CD4-positive, alpha-beta memory T cell (primary cell): ENCODE measurements at regions of chr14 and their contacts with region 1.

Region 1: DNA sequence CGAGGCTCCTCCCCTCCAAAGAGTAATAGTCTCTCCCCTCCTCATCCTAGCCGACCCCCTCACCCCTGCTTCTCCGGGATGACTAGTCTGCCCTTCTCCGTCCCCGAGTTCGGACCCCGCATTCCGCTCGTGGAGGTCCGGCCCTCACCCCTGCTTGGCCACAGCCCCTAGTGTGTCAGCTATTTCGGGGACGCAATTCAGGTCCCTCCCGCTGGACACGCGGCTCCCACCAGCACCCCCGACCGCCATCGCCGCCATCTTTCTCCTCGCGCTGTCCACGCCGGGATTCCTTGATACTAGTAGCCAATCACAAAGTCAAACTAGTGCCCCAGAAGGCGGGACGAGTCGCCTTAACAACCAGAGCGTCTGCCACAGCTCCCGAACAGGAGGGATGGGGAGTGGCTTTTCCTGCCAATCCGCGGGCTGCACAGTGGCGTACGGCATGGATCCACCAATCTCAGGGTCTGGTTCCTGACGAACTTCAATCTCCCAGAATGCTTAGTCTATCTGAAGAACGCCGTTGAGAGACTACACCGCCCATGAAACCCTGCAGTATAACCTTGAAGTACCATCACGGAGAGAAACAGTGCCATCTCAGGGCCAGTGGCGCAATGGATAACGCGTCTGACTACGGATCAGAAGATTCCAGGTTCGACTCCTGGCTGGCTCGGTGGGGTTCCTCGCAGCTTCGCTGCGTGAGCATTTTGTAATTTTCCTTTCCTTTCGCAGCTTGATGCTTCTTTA is at the start of gene PRMT5:
- DNase-seq: peak; percentile 98 to 100 (median 99)
- H3K4me3 ChIP-seq: peak within 1 kb of the TSS; percentile 83 to 99
- H3K4me3 Mint-ChIP-seq: no peak within 1 kb of the TSS
- H3K27ac ChIP-seq: peak within 1 kb of the TSS; percentile 91
- H3K27ac Mint-ChIP-seq: peak within 1 kb of the TSS in 1 of 7 donors; percentile 75
- H3K4me1 ChIP-seq: peaks cover 17% of the 10 kb centered on the region
- H3K4me1 Mint-ChIP-seq: peaks cover 9 to 14% (median 12%) of the 10 kb centered on the region in 4 donors
- H3K27me3 ChIP-seq: no peaks in the 10 kb centered on the region
- H3K27me3 Mint-ChIP-seq: no peaks in the 10 kb centered on the region
- total RNA-seq, gene PRMT5: 25.8 to 30.5 TPM

Region 2: GRCh38 chr14:22766456-22767322 is 162.6 kb before region 1 on chr14 and contains the start of gene OXA1L:
- CTCF ChIA-PET with region 1: interaction called, 3 read pairs
- POLR2A ChIA-PET with region 1: interaction called, 14 read pairs
- intact Hi-C with region 1: no loop called
- DNase-seq: peak; percentile 95 to 98 (median 98)
- H3K4me3 ChIP-seq: peak within 1 kb of the TSS; percentile 62 to 88
- H3K4me3 Mint-ChIP-seq: peak within 1 kb of the TSS; percentile 85 to 96 (median 94)
- H3K27ac ChIP-seq: peak within 1 kb of the TSS; percentile 88
- H3K27ac Mint-ChIP-seq: peak within 1 kb of the TSS; percentile 86 to 100 (median 98)
- H3K4me1 ChIP-seq: peaks cover 24% of the 10 kb centered on the region
- H3K4me1 Mint-ChIP-seq: peaks cover 26 to 39% (median 34%) of the 10 kb centered on the region in 4 donors
- H3K27me3 ChIP-seq: no peaks in the 10 kb centered on the region
- H3K27me3 Mint-ChIP-seq: no peaks in the 10 kb centered on the region
- total RNA-seq, gene OXA1L: 129 to 137 TPM

Region 3: GRCh38 chr14:22836301-22837113 is 92.8 kb before region 1 on chr14 and contains the start of gene MMP14:
- CTCF ChIA-PET with region 1: no interaction called
- POLR2A ChIA-PET with region 1: no interaction called
- intact Hi-C with region 1: no loop called
- DNase-seq: no peak
- H3K4me3 ChIP-seq: no peak within 1 kb of the TSS
- H3K4me3 Mint-ChIP-seq: peak within 1 kb of the TSS; percentile 74 to 86 (median 80)
- H3K27ac ChIP-seq: no peak within 1 kb of the TSS
- H3K27ac Mint-ChIP-seq: peak within 1 kb of the TSS in 4 of 7 donors; percentile 71 to 92 (median 78)
- H3K4me1 ChIP-seq: peaks cover 11% of the 10 kb centered on the region
- H3K4me1 Mint-ChIP-seq: peaks cover 4 to 18% (median 12%) of the 10 kb centered on the region in 4 donors
- H3K27me3 ChIP-seq: peaks cover 13% of the 10 kb centered on the region
- H3K27me3 Mint-ChIP-seq: peaks cover 8 to 22% of the 10 kb centered on the region in 2 donors
- total RNA-seq, gene MMP14: 3.0 to 3.8 TPM

Region 4: GRCh38 chr14:22886500-22887259 is 42.6 kb before region 1 on chr14:
- CTCF ChIA-PET with region 1: interaction called, 9 read pairs
- POLR2A ChIA-PET with region 1: interaction called, 7 read pairs
- intact Hi-C with region 1: loop called (anchors 2 kb)
- DNase-seq: peak; percentile 73 to 85 (median 78)
- H3K4me3 ChIP-seq: peak overlapping the region; percentile 24 to 30
- H3K4me3 Mint-ChIP-seq: peak overlapping the region; percentile 87 to 97 (median 94)
- H3K27ac ChIP-seq: peak overlapping the region; percentile 68
- H3K27ac Mint-ChIP-seq: peak overlapping the region; percentile 93 to 99 (median 97)
- H3K4me1 ChIP-seq: peaks cover 57% of the 10 kb centered on the region
- H3K4me1 Mint-ChIP-seq: peaks cover 34 to 85% (median 59%) of the 10 kb centered on the region in 4 donors
- H3K27me3 ChIP-seq: no peaks in the 10 kb centered on the region
- H3K27me3 Mint-ChIP-seq: no peaks in the 10 kb centered on the region

Region 5: DNA sequence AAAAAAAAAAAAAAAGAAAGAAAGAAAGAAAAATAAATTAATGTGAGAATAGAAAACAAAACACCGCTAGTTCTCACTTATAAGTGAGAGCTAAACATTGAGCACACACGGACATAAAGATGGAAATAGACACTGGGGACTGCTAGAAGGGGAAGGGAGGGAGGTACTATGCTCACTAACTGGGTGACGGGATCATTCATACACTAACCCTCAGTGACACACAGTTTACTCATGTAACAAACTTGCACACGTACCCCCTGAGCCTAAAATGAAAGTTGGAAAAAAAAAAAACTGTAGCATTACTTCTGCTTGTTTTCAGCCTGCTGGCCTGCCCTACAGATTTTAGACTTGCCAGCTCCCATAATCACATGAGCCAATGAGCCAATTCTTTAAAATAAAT is 10.4 kb after region 1 on chr14:
- CTCF ChIA-PET with region 1: interaction called, 22 read pairs
- POLR2A ChIA-PET with region 1: interaction called, 5 read pairs
- intact Hi-C with region 1: no loop called
- DNase-seq: no peak
- H3K4me3 ChIP-seq: no peak overlapping the region
- H3K4me3 Mint-ChIP-seq: no peak overlapping the region
- H3K27ac ChIP-seq: no peak overlapping the region
- H3K27ac Mint-ChIP-seq: peak overlapping the region in 1 of 7 donors; percentile 1
- H3K4me1 ChIP-seq: no peaks in the 10 kb centered on the region
- H3K4me1 Mint-ChIP-seq: peaks cover 0 to 6% (median under 1%) of the 10 kb centered on the region in 4 donors
- H3K27me3 ChIP-seq: no peaks in the 10 kb centered on the region
- H3K27me3 Mint-ChIP-seq: no peaks in the 10 kb centered on the region

Region 6: GRCh38 chr14:22973217-22974032 is 44.1 kb after region 1 on chr14:
- CTCF ChIA-PET with region 1: interaction called, 18 read pairs
- POLR2A ChIA-PET with region 1: interaction called, 8 read pairs
- intact Hi-C with region 1: no loop called
- DNase-seq: peak in 4 of 5 donors; percentile 32 to 46 (median 38)
- H3K4me3 ChIP-seq: no peak overlapping the region
- H3K4me3 Mint-ChIP-seq: no peak overlapping the region
- H3K27ac ChIP-seq: no peak overlapping the region
- H3K27ac Mint-ChIP-seq: no peak overlapping the region
- H3K4me1 ChIP-seq: no peaks in the 10 kb centered on the region
- H3K4me1 Mint-ChIP-seq: no peaks in the 10 kb centered on the region
- H3K27me3 ChIP-seq: no peaks in the 10 kb centered on the region
- H3K27me3 Mint-ChIP-seq: peaks cover 0 to 3% of the 10 kb centered on the region in 2 donors

Region 7: DNA sequence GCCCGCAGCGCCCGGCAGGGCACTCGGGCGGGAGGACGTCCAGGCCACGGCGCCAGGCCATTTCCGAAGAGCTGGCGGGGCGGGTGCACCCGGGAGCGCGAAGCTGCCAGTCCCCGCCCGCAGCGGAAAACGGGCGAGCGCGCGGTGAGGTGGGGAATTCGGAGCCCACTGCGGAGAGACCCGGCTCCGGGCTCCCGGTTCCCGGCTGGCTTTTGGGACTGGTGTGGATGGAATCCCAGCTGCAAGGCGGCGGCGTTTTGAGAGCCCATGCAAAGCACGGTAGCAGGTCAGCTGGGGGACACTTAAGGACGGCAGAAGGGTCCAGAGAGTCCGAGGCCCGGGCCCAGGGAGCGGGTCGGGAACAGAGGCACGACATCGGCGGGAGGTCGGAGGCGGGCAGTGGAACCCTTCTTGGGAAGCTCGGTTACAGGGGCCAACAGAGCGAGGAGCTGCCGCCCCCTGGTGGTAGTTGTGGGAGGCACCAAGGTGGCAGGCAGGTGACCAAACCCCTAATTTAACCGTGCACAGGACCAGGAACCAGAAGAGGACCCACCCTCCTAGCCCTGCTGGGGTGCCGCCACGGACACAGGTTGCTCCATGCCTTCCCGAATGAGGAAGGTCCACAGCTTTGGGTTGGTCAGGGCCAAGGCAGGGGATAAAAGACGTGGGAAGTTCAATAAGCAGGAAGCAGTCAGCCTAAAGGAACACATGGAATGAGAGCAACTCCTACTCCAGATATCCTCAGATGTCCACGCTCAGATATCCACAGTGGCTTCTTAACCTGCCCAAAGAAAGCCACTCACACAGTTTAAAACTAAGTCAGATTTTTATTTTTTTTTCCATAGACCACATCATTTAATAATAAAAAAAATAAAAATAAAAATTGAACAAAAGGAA is 128.7 kb after region 1 on chr14:
- CTCF ChIA-PET with region 1: interaction called, 15 read pairs
- POLR2A ChIA-PET with region 1: interaction called, 3 read pairs
- intact Hi-C with region 1: loop called (anchors 1 kb)
- DNase-seq: peak; percentile 80 to 84 (median 82)
- H3K4me3 ChIP-seq: peak overlapping the region; percentile 36 to 89
- H3K4me3 Mint-ChIP-seq: peak overlapping the region; percentile 84 to 91 (median 88)
- H3K27ac ChIP-seq: peak overlapping the region; percentile 36
- H3K27ac Mint-ChIP-seq: peak overlapping the region in 6 of 7 donors; percentile 60 to 83 (median 82)
- H3K4me1 ChIP-seq: peaks cover 17% of the 10 kb centered on the region
- H3K4me1 Mint-ChIP-seq: peaks cover 11 to 21% (median 15%) of the 10 kb centered on the region in 4 donors
- H3K27me3 ChIP-seq: no peaks in the 10 kb centered on the region
- H3K27me3 Mint-ChIP-seq: peaks cover 0 to 1% of the 10 kb centered on the region in 2 donors

Region 8: GRCh38 chr14:23469127-23469905 is 540.0 kb after region 1 on chr14 and contains the start of gene NGDN:
- CTCF ChIA-PET with region 1: no interaction called
- POLR2A ChIA-PET with region 1: no interaction called
- intact Hi-C with region 1: no loop called
- DNase-seq: peak; percentile 93 to 99 (median 97)
- H3K4me3 ChIP-seq: peak within 1 kb of the TSS; percentile 75 to 78
- H3K4me3 Mint-ChIP-seq: peak within 1 kb of the TSS in 1 of 8 donors; percentile 35
- H3K27ac ChIP-seq: peak within 1 kb of the TSS; percentile 89
- H3K27ac Mint-ChIP-seq: peak within 1 kb of the TSS in 3 of 7 donors; percentile 36 to 78 (median 43)
- H3K4me1 ChIP-seq: peaks cover 17% of the 10 kb centered on the region
- H3K4me1 Mint-ChIP-seq: peaks cover 0 to 7% (median 6%) of the 10 kb centered on the region in 4 donors
- H3K27me3 ChIP-seq: no peaks in the 10 kb centered on the region
- H3K27me3 Mint-ChIP-seq: no peaks in the 10 kb centered on the region
- total RNA-seq, gene NGDN: 60.7 to 63.5 TPM